ENCODE measurements at regions of chr6 and their contacts with region 1.

Region 1: DNA sequence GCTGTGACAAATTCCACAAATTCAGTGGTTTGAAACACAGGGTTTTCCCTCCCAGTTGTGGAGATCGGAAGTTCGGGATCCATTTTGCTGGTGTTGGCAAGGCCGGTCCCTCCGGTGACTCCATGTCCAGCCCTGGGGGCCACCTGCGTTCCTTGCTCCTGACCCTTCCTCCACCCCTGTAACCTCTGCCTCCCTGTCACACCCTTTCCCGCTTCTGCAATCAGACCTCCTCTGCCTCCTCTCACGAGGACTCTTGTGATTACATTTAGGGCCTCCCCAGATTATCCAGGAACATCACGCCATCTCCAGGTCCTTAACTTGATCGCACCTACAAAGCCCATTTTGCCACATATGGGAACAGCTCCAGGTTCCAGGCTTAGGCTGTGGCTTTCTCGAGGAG is 12.5 kb downstream of the RPS6KA2 start:
- DNase-seq: no peak

Region 2: GRCh38 chr6:166575205-166575604 is 39.4 kb before region 1 on chr6:
- intact Hi-C with region 1: loop called (anchors 5 kb)
- DNase-seq: no peak

Region 3: GRCh38 chr6:166721576-166721975 is 107.0 kb after region 1 on chr6:
- intact Hi-C with region 1: no loop called
- DNase-seq: no peak

Region 4: GRCh38 chr6:166866839-166867637 is 252.4 kb after region 1 on chr6:
- intact Hi-C with region 1: no loop called
- DNase-seq: no peak

Measured in cardiac septum (tissue), 1 donor.